ENCODE measurements at regions of chr10 and their contacts with region 1.

Region 1: GRCh38 chr10:103685880-103686669 is 169.3 kb downstream of the SH3PXD2A start:
- DNase-seq: peak; percentile 56 to 81 (median 76)
- ATAC-seq: peak; percentile 98
- H3K4me3 ChIP-seq: no peak overlapping the region
- H3K4me3 Mint-ChIP-seq: no peak overlapping the region
- H3K27ac ChIP-seq: no peak overlapping the region
- H3K27ac Mint-ChIP-seq: no peak overlapping the region
- H3K4me1 ChIP-seq: no peaks in the 10 kb centered on the region
- H3K4me1 Mint-ChIP-seq: no peaks in the 10 kb centered on the region
- H3K27me3 ChIP-seq: no peaks in the 10 kb centered on the region
- H3K27me3 Mint-ChIP-seq: no peaks in the 10 kb centered on the region
- CTCF ChIP-seq: peak; percentile 94

Region 2: GRCh38 chr10:103592186-103593021 is 93.7 kb before region 1 on chr10:
- CTCF ChIA-PET with region 1: interaction called, 12 read pairs
- POLR2A ChIA-PET with region 1: no interaction called
- intact Hi-C with region 1: no loop called
- DNase-seq: peak in 7 of 9 experiments; percentile 24 to 56 (median 37)
- ATAC-seq: peak; percentile 85
- H3K4me3 ChIP-seq: no peak overlapping the region
- H3K4me3 Mint-ChIP-seq: no peak overlapping the region
- H3K27ac ChIP-seq: no peak overlapping the region
- H3K27ac Mint-ChIP-seq: no peak overlapping the region
- H3K4me1 ChIP-seq: no peaks in the 10 kb centered on the region
- H3K4me1 Mint-ChIP-seq: no peaks in the 10 kb centered on the region
- H3K27me3 ChIP-seq: no peaks in the 10 kb centered on the region
- H3K27me3 Mint-ChIP-seq: no peaks in the 10 kb centered on the region
- CTCF ChIP-seq: peak; percentile 40

Region 3: GRCh38 chr10:103605359-103606095 is 80.5 kb before region 1 on chr10:
- CTCF ChIA-PET with region 1: interaction called, 80 read pairs
- POLR2A ChIA-PET with region 1: no interaction called
- intact Hi-C with region 1: loop called in 1 of 2 experiments (anchors 1 kb)
- DNase-seq: peak in 6 of 9 experiments; percentile 29 to 61 (median 42)
- ATAC-seq: peak; percentile 68
- H3K4me3 ChIP-seq: no peak overlapping the region
- H3K4me3 Mint-ChIP-seq: no peak overlapping the region
- H3K27ac ChIP-seq: no peak overlapping the region
- H3K27ac Mint-ChIP-seq: no peak overlapping the region
- H3K4me1 ChIP-seq: no peaks in the 10 kb centered on the region
- H3K4me1 Mint-ChIP-seq: no peaks in the 10 kb centered on the region
- H3K27me3 ChIP-seq: no peaks in the 10 kb centered on the region
- H3K27me3 Mint-ChIP-seq: no peaks in the 10 kb centered on the region
- CTCF ChIP-seq: peak; percentile 67

Region 4: DNA sequence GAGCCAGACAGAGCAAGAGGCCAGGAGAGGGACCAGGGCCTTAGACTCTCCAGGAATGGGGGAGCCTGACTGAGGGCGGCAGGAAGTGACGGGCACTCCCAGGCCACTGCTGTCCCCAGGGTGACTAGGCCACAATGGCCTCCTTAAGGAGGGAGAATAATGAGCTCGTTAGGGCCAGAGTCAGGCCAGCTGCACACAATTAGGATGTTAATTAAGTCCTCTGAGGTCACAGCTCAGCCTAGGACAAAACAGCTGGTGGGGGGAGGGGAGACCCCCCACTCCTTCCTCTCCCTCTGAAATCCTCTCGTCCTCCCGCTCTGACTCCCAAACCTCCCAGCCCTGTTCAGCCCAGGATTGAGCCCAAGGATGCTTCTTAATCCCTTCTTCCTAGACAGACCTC is 49.6 kb before region 1 on chr10:
- CTCF ChIA-PET with region 1: interaction called, 15 read pairs
- POLR2A ChIA-PET with region 1: no interaction called
- intact Hi-C with region 1: no loop called
- DNase-seq: no peak
- ATAC-seq: no peak
- H3K4me3 ChIP-seq: no peak overlapping the region
- H3K4me3 Mint-ChIP-seq: no peak overlapping the region
- H3K27ac ChIP-seq: no peak overlapping the region
- H3K27ac Mint-ChIP-seq: no peak overlapping the region
- H3K4me1 ChIP-seq: no peaks in the 10 kb centered on the region
- H3K4me1 Mint-ChIP-seq: no peaks in the 10 kb centered on the region
- H3K27me3 ChIP-seq: no peaks in the 10 kb centered on the region
- H3K27me3 Mint-ChIP-seq: no peaks in the 10 kb centered on the region
- CTCF ChIP-seq: no peak

Region 5: DNA sequence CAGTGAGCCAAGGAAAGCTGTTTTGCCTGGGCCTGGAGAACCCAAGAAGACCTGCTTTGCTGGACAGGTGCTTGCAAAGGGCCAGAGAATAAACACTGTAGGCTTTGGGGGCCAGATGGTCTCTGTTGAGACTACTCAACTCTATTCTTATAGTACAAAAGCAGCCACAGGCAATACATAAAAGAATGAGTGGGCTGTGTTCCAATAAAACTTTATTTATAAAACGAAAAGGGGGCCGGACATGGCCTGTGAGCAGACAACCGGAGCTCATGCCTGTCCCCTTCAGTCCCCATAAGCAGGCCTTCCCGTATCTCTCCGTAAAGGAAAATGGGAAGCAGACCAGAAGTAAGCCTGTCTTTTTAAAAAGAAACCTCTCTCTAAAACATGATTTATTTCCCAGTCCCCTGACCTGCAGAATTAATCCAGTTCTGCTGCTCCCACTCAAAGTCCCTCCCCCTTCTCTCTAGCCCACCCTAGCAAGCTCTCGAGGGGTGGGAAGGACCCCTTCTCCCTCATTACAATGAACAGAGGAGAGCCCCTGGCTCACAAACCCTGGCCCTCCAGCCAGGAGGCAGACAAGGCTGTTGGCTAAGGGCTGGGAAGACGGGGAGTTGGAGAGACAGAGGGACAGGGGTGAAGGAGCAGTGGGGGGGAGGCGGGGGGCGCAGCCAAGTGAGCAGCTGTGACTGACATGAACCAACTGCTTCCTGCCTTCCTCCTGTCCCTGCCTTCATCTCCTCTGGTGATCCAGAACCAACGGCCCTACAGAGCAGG is 14.8 kb before region 1 on chr10:
- CTCF ChIA-PET with region 1: interaction called, 16 read pairs
- POLR2A ChIA-PET with region 1: no interaction called
- intact Hi-C with region 1: no loop called
- DNase-seq: no peak
- ATAC-seq: no peak
- H3K4me3 ChIP-seq: no peak overlapping the region
- H3K4me3 Mint-ChIP-seq: no peak overlapping the region
- H3K27ac ChIP-seq: no peak overlapping the region
- H3K27ac Mint-ChIP-seq: no peak overlapping the region
- H3K4me1 ChIP-seq: peaks cover 16% of the 10 kb centered on the region
- H3K4me1 Mint-ChIP-seq: peaks cover 15% of the 10 kb centered on the region
- H3K27me3 ChIP-seq: no peaks in the 10 kb centered on the region
- H3K27me3 Mint-ChIP-seq: no peaks in the 10 kb centered on the region
- CTCF ChIP-seq: no peak

Measured in CD8-positive, alpha-beta T cell (primary cell).